ENCODE measurements at regions of chr12 and their contacts with region 1.

Region 1: DNA sequence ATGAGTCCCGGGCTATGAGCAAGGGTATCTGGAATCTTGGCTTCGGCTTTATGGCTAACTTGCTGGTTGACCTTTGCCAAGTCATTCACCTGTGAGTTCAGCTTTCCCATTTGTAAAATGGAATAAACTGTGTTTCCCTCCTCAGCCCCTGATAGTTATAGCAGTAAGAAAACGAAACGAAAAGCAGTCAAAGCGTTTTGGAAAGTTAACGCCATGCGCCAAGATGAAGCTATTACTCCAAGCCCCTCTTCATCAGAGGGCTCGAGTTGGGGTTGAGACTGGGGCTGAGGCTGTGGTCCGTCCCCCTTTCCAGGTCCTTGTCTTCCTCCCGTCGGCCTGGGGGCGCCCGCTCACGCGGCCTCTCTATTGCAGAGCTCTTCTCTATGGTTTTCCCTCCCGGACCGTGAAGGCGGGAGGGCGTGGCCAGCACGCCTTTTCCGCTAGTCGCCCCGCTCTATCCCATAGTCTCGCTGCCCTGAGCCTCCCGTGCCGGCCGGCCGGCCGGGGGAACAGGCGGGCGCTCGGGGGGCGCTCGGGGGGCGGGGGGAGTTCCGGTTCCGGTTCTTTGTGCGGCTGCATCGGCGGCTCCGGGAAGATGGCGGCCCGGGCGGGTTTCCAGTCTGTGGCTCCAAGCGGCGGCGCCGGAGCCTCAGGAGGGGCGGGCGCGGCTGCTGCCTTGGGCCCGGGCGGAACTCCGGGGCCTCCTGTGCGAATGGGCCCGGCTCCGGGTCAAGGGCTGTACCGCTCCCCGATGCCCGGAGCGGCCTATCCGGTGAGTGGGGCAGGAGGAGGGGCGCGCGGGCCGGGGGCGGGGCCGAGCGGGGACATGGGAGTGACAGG is at the start of gene SMARCD1:
- DNase-seq: peak; percentile 88

Region 2: DNA sequence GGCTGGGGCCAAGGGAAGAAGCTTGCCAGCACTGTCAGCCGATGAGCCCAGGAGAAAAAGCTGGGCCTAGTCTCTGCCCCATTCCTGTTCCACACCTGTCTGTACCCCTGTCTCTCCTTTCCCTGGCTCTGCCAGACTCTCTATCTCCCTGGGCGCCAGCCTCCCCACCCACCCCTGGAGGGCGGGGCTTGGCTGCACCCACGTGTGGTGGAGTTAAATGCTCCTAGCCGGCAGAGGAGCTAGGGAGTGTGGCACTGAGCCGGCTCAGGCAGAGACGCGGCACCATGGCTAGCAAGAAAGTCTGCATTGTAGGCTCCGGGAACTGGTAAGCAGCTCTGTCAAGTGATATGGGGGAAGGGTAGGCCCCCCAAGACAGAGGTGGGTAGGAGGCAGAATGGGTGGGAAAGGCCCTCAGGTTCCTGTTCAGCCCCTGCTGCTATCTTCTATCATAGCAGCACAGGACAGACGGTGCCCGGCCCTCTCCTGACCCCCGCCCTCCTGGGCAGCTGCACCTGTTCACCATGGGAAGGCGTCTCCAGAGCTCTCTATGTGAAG is 18.8 kb after region 1 on chr12 and contains the start of gene GPD1:
- CTCF ChIA-PET with region 1: interaction called, 16 read pairs
- POLR2A ChIA-PET with region 1: interaction called, 12 read pairs
- DNase-seq: no peak

Region 3: DNA sequence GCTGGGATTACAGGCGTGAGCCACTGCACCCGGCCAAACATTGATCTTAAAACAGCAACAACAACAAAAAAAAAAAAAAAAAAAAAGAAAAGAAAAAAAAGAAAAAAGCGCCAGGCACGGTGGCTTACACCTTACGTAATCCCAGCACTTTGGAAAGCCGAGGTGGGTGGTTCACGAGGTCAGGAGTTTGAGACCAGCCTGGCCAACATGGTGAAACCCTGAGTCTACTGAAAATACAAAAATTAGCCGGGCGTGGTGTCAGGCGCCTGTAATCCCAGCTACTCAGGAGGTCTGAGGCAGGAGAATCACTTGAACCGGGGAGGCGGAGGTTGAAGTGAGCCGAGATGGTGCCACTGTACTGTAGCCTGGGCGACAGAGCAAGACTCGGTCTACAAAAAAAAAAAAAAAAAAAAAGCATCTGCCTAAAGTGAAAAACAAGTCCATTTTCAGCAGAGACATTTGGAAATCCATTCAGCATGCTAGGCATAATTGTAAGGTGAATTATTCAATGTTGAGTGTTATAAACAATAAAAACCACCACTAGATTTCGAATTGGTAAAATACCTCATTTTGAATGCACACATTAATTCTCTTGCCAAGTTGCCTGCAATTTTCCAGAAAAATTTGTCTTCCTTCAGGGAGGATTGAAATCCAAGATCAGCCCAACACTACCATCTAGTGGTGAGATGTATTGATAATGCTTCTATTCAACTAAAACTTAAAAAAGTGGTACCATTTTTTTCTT is 90.1 kb after region 1 on chr12:
- CTCF ChIA-PET with region 1: interaction called, 7 read pairs
- POLR2A ChIA-PET with region 1: interaction called, 10 read pairs
- DNase-seq: peak; percentile 45